ENCODE measurements at regions of chr18 and their contacts with region 1.

Region 1: GRCh38 chr18:54149078-54149697 is 75.3 kb downstream of the MBD2 start:
- DNase-seq: peak; percentile 69
- ATAC-seq: peak; percentile 76
- H3K4me3 ChIP-seq: peak overlapping the region; percentile 33
- H3K27ac ChIP-seq: peak overlapping the region; percentile 86
- H3K4me1 ChIP-seq: peaks cover 32% of the 10 kb centered on the region
- H3K27me3 ChIP-seq: no peaks in the 10 kb centered on the region
- CTCF ChIP-seq: no peak
- EP300 ChIP-seq: peak; percentile 79 to 84
- POLR2A ChIP-seq: no peak
- RAD21 ChIP-seq: peak; percentile 25; the same call in 1 of the 2 replicates

Region 2: GRCh38 chr18:53521068-53521467 is 628.1 kb before region 1 on chr18:
- CTCF ChIA-PET with region 1: no interaction called
- POLR2A ChIA-PET with region 1: no interaction called
- RAD21 ChIA-PET with region 1: no interaction called
- SMC1A ChIA-PET with region 1: no interaction called
- in situ Hi-C with region 1: no loop called
- intact Hi-C with region 1: no loop called
- DNase-seq: no peak
- ATAC-seq: no peak
- H3K4me3 ChIP-seq: no peak overlapping the region
- H3K27ac ChIP-seq: no peak overlapping the region
- H3K4me1 ChIP-seq: no peaks in the 10 kb centered on the region
- H3K27me3 ChIP-seq: no peaks in the 10 kb centered on the region
- CTCF ChIP-seq: no peak
- EP300 ChIP-seq: no peak
- POLR2A ChIP-seq: no peak
- RAD21 ChIP-seq: no peak

Region 3: GRCh38 chr18:54127759-54128378 is 21.3 kb before region 1 on chr18:
- CTCF ChIA-PET with region 1: interaction called, 16 read pairs
- POLR2A ChIA-PET with region 1: no interaction called
- RAD21 ChIA-PET with region 1: interaction called, 9 read pairs
- SMC1A ChIA-PET with region 1: interaction called, 5 read pairs
- in situ Hi-C with region 1: no loop called
- intact Hi-C with region 1: no loop called
- DNase-seq: no peak
- ATAC-seq: peak; percentile 90
- H3K4me3 ChIP-seq: no peak overlapping the region
- H3K27ac ChIP-seq: no peak overlapping the region
- H3K4me1 ChIP-seq: peaks cover 3% of the 10 kb centered on the region
- H3K27me3 ChIP-seq: no peaks in the 10 kb centered on the region
- CTCF ChIP-seq: peak; percentile 54 to 65 (median 57); a peak in 5 of 6 replicates
- EP300 ChIP-seq: no peak
- POLR2A ChIP-seq: no peak
- RAD21 ChIP-seq: peak; percentile 78

Region 4: GRCh38 chr18:54162431-54162830 is 13.2 kb after region 1 on chr18:
- CTCF ChIA-PET with region 1: interaction called, 5 read pairs
- POLR2A ChIA-PET with region 1: interaction called, 4 read pairs
- RAD21 ChIA-PET with region 1: interaction called, 4 read pairs
- SMC1A ChIA-PET with region 1: interaction called, 12 read pairs
- in situ Hi-C with region 1: no loop called
- intact Hi-C with region 1: no loop called
- DNase-seq: no peak
- ATAC-seq: no peak
- H3K4me3 ChIP-seq: no peak overlapping the region
- H3K27ac ChIP-seq: no peak overlapping the region
- H3K4me1 ChIP-seq: no peaks in the 10 kb centered on the region
- H3K27me3 ChIP-seq: no peaks in the 10 kb centered on the region
- CTCF ChIP-seq: no peak
- EP300 ChIP-seq: no peak
- POLR2A ChIP-seq: no peak
- RAD21 ChIP-seq: no peak

Region 5: DNA sequence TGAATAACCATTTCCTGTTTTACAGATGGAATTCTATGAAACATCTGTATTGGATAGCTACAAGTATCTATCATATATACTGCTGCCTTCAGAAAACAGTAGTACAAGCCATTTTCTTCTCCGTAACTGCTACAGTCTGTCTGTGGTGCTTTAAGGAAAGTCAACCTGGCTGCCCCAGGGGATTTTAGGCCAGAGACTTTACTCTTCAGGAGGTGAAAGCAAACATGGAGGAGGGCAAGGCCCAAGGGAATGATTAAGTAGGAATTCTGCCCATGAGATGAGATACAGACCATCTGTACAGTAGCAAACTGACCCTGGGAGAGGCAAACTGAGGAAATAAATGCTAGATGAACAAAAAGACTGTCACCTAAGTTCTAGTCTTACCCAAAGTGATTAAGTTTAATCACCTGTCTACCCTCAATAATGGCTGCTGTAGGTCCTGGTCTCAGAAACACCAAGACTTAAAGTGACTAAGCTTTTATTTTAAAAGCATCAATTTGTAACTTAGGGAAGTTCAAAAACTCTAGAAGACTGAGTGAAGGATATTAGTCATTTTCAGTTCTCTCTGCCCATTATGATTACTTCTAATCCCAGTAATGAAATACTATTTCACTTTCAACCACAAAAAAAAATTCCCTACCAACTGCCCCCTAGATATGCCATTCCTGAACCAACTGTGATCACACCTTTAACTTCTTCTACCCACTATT is 60.4 kb after region 1 on chr18:
- CTCF ChIA-PET with region 1: interaction called, 3 read pairs
- POLR2A ChIA-PET with region 1: interaction called, 8 read pairs
- RAD21 ChIA-PET with region 1: interaction called, 8 read pairs
- SMC1A ChIA-PET with region 1: interaction called, 6 read pairs
- in situ Hi-C with region 1: no loop called
- intact Hi-C with region 1: loop called (anchors 2 kb)
- DNase-seq: peak; percentile 61
- ATAC-seq: peak; percentile 83
- H3K4me3 ChIP-seq: peak overlapping the region; percentile 64
- H3K27ac ChIP-seq: peak overlapping the region; percentile 98
- H3K4me1 ChIP-seq: peaks cover 32% of the 10 kb centered on the region
- H3K27me3 ChIP-seq: no peaks in the 10 kb centered on the region
- CTCF ChIP-seq: no peak
- EP300 ChIP-seq: peak; percentile 94 to 97
- POLR2A ChIP-seq: no peak
- RAD21 ChIP-seq: no peak

Region 6: GRCh38 chr18:54217624-54218023 is 68.4 kb after region 1 on chr18:
- CTCF ChIA-PET with region 1: interaction called, 3 read pairs
- POLR2A ChIA-PET with region 1: interaction called, 5 read pairs
- RAD21 ChIA-PET with region 1: interaction called, 10 read pairs
- SMC1A ChIA-PET with region 1: interaction called, 11 read pairs
- in situ Hi-C with region 1: no loop called
- intact Hi-C with region 1: no loop called
- DNase-seq: no peak
- ATAC-seq: peak; percentile 35
- H3K4me3 ChIP-seq: peak overlapping the region; percentile 77
- H3K27ac ChIP-seq: peak overlapping the region; percentile 88
- H3K4me1 ChIP-seq: peaks cover 20% of the 10 kb centered on the region
- H3K27me3 ChIP-seq: no peaks in the 10 kb centered on the region
- CTCF ChIP-seq: no peak
- EP300 ChIP-seq: no peak
- POLR2A ChIP-seq: no peak
- RAD21 ChIP-seq: no peak

Region 7: GRCh38 chr18:54240629-54241107 is 91.5 kb after region 1 on chr18:
- CTCF ChIA-PET with region 1: no interaction called
- POLR2A ChIA-PET with region 1: no interaction called
- RAD21 ChIA-PET with region 1: no interaction called
- SMC1A ChIA-PET with region 1: no interaction called
- in situ Hi-C with region 1: no loop called
- intact Hi-C with region 1: no loop called
- DNase-seq: no peak
- ATAC-seq: no peak
- H3K4me3 ChIP-seq: no peak overlapping the region
- H3K27ac ChIP-seq: no peak overlapping the region
- H3K4me1 ChIP-seq: no peaks in the 10 kb centered on the region
- H3K27me3 ChIP-seq: no peaks in the 10 kb centered on the region; a peak in 1 of 4 replicates
- CTCF ChIP-seq: no peak
- EP300 ChIP-seq: no peak
- POLR2A ChIP-seq: no peak
- RAD21 ChIP-seq: no peak

Region 8: GRCh38 chr18:54261894-54262293 is 112.7 kb after region 1 on chr18:
- CTCF ChIA-PET with region 1: interaction called, 3 read pairs
- POLR2A ChIA-PET with region 1: no interaction called
- RAD21 ChIA-PET with region 1: no interaction called
- SMC1A ChIA-PET with region 1: no interaction called
- in situ Hi-C with region 1: loop called (anchors 5 kb)
- intact Hi-C with region 1: loop called (anchors 2 kb)
- DNase-seq: peak; percentile 85
- ATAC-seq: peak; percentile 80
- H3K4me3 ChIP-seq: peak overlapping the region; percentile 44; the same call in 1 of the 2 replicates
- H3K27ac ChIP-seq: peak overlapping the region; percentile 94
- H3K4me1 ChIP-seq: peaks cover 49% of the 10 kb centered on the region
- H3K27me3 ChIP-seq: no peaks in the 10 kb centered on the region
- CTCF ChIP-seq: no peak
- EP300 ChIP-seq: peak; percentile 22 to 67; a peak in 2 of 4 replicates
- POLR2A ChIP-seq: no peak
- RAD21 ChIP-seq: 0 out of 2 replicates have a peak, but pooled peaks have one; percentile 11